Activated CD8-positive, alpha-beta T cell treated with anti-CD3 and anti-CD28 coated beads, Interleukin-2, amount 10 ng/mL, durations not matched to agents 7 days and 5 days (primary cell): ENCODE measurements at regions of chr3 and their contacts with region 1.

Region 1: DNA sequence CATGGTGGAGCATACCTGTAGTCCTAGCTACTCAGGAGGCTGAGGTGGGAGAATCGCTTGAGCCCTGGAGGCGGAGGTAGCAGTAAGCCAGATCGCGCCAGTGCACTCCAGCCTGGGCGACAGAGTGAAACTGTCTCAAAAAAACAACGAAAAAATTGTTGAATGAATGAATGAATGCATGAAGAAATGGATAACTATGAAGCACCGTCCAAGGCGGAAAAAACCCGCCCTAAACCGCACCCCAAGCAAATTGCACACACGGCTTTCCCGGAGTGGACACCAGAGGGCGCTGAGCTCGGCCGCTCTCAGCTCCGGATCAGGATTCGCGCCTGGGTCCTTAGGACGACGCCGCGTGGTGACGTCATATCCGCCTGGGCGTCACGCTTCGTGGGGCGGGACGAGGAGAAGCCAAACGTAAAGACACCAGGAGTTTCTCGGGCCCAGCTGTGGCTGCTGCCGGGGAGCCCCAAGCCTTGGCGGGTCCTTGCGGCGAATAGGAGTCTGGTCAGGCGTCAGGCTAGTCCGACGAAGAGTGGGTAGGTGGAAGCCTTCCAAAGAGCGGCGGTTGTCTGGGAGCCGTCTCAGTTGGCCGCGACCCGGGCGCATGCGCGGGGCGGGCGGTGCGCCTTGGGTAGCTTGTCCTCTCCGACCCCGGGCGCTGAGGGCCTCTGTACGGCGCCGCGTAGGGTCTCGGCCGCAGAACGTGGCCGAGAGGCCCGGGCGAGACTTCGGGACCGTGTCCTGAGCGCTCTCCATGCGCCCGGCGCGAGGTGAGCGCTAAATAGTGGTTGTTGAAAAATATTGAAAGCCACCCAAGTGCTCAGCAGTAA is at the starts of genes HTD2 and RPP14:
- DNase-seq: peak; percentile 98
- ATAC-seq: peak; percentile 88
- H3K4me3 Mint-ChIP-seq: peak within 1 kb of the TSS; percentile 90
- H3K27ac Mint-ChIP-seq: peak within 1 kb of the TSS; percentile 100
- H3K4me1 Mint-ChIP-seq: peaks cover 29% of the 10 kb centered on the region
- H3K27me3 Mint-ChIP-seq: peaks cover 8% of the 10 kb centered on the region
- total RNA-seq, gene HTD2: 7.6 to 8.1 TPM
- total RNA-seq, gene RPP14: 12.8 to 15.1 TPM

Region 2: GRCh38 chr3:58041654-58042324 is 264.3 kb before region 1 on chr3:
- CTCF ChIA-PET with region 1: no interaction called
- POLR2A ChIA-PET with region 1: no interaction called
- DNase-seq: peak; percentile 28
- ATAC-seq: peak; percentile 62
- H3K4me3 Mint-ChIP-seq: no peak overlapping the region
- H3K27ac Mint-ChIP-seq: peak overlapping the region; percentile 54
- H3K4me1 Mint-ChIP-seq: peaks cover 33% of the 10 kb centered on the region
- H3K27me3 Mint-ChIP-seq: peaks cover 4% of the 10 kb centered on the region

Region 3: GRCh38 chr3:58177747-58178527 is 128.2 kb before region 1 on chr3:
- CTCF ChIA-PET with region 1: interaction called, 13 read pairs
- POLR2A ChIA-PET with region 1: interaction called, 4 read pairs
- DNase-seq: peak; percentile 91
- ATAC-seq: peak; percentile 98
- H3K4me3 Mint-ChIP-seq: peak overlapping the region; percentile 60
- H3K27ac Mint-ChIP-seq: no peak overlapping the region
- H3K4me1 Mint-ChIP-seq: peaks cover 20% of the 10 kb centered on the region
- H3K27me3 Mint-ChIP-seq: peaks cover 2% of the 10 kb centered on the region

Region 4: GRCh38 chr3:58217209-58217811 is 88.8 kb before region 1 on chr3:
- CTCF ChIA-PET with region 1: interaction called, 12 read pairs
- POLR2A ChIA-PET with region 1: no interaction called
- DNase-seq: peak; percentile 72
- ATAC-seq: peak; percentile 89
- H3K4me3 Mint-ChIP-seq: no peak overlapping the region
- H3K27ac Mint-ChIP-seq: no peak overlapping the region
- H3K4me1 Mint-ChIP-seq: peaks cover 15% of the 10 kb centered on the region
- H3K27me3 Mint-ChIP-seq: peaks cover 10% of the 10 kb centered on the region

Region 5: GRCh38 chr3:58293516-58293915 is 12.6 kb before region 1 on chr3:
- CTCF ChIA-PET with region 1: interaction called, 14 read pairs
- POLR2A ChIA-PET with region 1: no interaction called
- DNase-seq: no peak
- ATAC-seq: no peak
- H3K4me3 Mint-ChIP-seq: no peak overlapping the region
- H3K27ac Mint-ChIP-seq: no peak overlapping the region
- H3K4me1 Mint-ChIP-seq: no peaks in the 10 kb centered on the region
- H3K27me3 Mint-ChIP-seq: no peaks in the 10 kb centered on the region

Region 6: GRCh38 chr3:58332575-58333188 is 26.6 kb after region 1 on chr3 and contains the start of gene PXK:
- CTCF ChIA-PET with region 1: interaction called, 55 read pairs
- POLR2A ChIA-PET with region 1: interaction called, 3 read pairs
- DNase-seq: peak; percentile 84
- ATAC-seq: peak; percentile 94
- H3K4me3 Mint-ChIP-seq: peak within 1 kb of the TSS; percentile 100
- H3K27ac Mint-ChIP-seq: peak within 1 kb of the TSS; percentile 94
- H3K4me1 Mint-ChIP-seq: peaks cover 41% of the 10 kb centered on the region
- H3K27me3 Mint-ChIP-seq: no peaks in the 10 kb centered on the region
- total RNA-seq, gene PXK: 31.5 to 33.4 TPM

Region 7: DNA sequence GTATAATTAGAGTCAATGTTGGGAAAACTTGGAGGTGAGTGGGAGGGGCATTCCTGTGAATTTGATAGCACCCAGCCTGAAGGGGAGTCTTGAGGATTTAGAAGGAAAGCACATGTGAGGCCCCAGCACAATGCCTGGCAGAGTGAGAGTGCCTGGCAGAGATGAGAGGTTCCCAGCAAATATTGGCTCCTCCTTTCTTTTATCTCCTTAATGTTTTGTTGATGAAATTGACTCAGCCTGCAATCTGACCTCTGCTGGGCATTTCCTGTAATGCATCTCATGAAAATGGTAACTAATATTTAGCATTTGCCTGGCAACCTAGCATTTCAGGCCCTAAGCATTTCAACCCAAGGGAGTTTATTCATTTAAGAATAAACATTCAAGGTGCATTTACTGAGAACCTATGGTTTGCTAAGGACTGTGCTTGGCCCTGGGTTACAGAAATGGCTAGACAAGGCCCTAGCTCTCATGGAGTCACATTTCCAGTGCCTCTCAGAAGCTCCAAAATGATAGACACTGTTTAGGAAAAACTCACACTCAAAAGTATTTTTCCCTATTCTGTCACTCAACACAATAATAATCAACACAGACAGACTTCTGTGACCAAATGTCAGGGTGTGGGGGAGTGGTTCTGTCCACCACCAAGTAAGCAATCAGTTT is 108.6 kb after region 1 on chr3:
- CTCF ChIA-PET with region 1: interaction called, 43 read pairs
- POLR2A ChIA-PET with region 1: no interaction called
- DNase-seq: peak; percentile 69
- ATAC-seq: peak; percentile 78
- H3K4me3 Mint-ChIP-seq: no peak overlapping the region
- H3K27ac Mint-ChIP-seq: no peak overlapping the region
- H3K4me1 Mint-ChIP-seq: peaks cover 6% of the 10 kb centered on the region
- H3K27me3 Mint-ChIP-seq: no peaks in the 10 kb centered on the region

Region 8: GRCh38 chr3:58608648-58609047 is 302.6 kb after region 1 on chr3:
- CTCF ChIA-PET with region 1: no interaction called
- POLR2A ChIA-PET with region 1: no interaction called
- DNase-seq: no peak
- ATAC-seq: no peak
- H3K4me3 Mint-ChIP-seq: no peak overlapping the region
- H3K27ac Mint-ChIP-seq: no peak overlapping the region
- H3K4me1 Mint-ChIP-seq: peaks cover 12% of the 10 kb centered on the region
- H3K27me3 Mint-ChIP-seq: peaks cover 15% of the 10 kb centered on the region

Region 9: GRCh38 chr3:58630076-58630709 is 324.1 kb after region 1 on chr3:
- CTCF ChIA-PET with region 1: interaction called, 34 read pairs
- POLR2A ChIA-PET with region 1: no interaction called
- DNase-seq: peak; percentile 69
- ATAC-seq: peak; percentile 65
- H3K4me3 Mint-ChIP-seq: no peak overlapping the region
- H3K27ac Mint-ChIP-seq: no peak overlapping the region
- H3K4me1 Mint-ChIP-seq: peaks cover 1% of the 10 kb centered on the region
- H3K27me3 Mint-ChIP-seq: no peaks in the 10 kb centered on the region